ENCODE measurements at regions of chr2 and their contacts with region 1.

Region 1: GRCh38 chr2:169513926-169514325 is 4.4 kb downstream of the KLHL41 start:
- DNase-seq: no peak
- H3K4me3 ChIP-seq: no peak overlapping the region
- CTCF ChIP-seq: no peak

Region 2: GRCh38 chr2:169528271-169528701 is 14.4 kb after region 1 on chr2:
- CTCF ChIA-PET with region 1: interaction called, 16 read pairs
- POLR2A ChIA-PET with region 1: no interaction called
- DNase-seq: no peak
- H3K4me3 ChIP-seq: no peak overlapping the region
- CTCF ChIP-seq: peak; percentile 78